ENCODE measurements at regions of chr2 and their contacts with region 1.

Region 1: GRCh38 chr2:41869542-41870264 is 178.1 kb upstream of the PKDCC start:
- DNase-seq: peak; percentile 32
- H3K4me3 Mint-ChIP-seq: no peak overlapping the region
- H3K27ac Mint-ChIP-seq: no peak overlapping the region
- H3K4me1 Mint-ChIP-seq: no peaks in the 10 kb centered on the region
- H3K27me3 Mint-ChIP-seq: peaks cover 12% of the 10 kb centered on the region

Region 2: DNA sequence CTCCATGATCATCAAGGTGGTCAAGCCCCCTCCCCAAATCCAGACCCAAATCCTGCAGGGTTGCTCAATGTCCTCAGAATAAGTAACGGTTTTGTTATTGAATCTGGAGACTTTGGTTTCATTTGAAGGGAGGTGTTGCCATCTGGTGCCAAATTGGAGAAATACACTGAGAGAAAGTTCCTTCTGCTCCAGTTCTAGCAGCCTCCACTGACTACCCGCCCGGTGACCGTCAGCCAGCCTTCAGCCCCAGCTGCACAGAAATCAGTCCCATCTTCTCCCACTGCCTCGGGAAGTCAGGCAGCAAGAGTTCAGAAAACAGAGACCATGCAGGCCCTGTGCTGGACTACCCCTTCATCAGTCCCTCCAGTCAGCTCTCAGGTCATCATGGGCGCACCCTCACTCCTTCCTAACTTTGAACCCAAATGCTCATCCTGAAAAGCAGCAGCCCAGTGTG is 216.8 kb after region 1 on chr2:
- intact Hi-C with region 1: loop called (anchors 1 kb)
- DNase-seq: peak; percentile 23
- H3K4me3 Mint-ChIP-seq: no peak overlapping the region
- H3K27ac Mint-ChIP-seq: no peak overlapping the region
- H3K4me1 Mint-ChIP-seq: peaks cover 16% of the 10 kb centered on the region
- H3K27me3 Mint-ChIP-seq: peaks cover 24% of the 10 kb centered on the region

Region 3: GRCh38 chr2:42328148-42328833 is 458.6 kb after region 1 on chr2:
- intact Hi-C with region 1: loop called (anchors 10 kb)
- DNase-seq: no peak
- H3K4me3 Mint-ChIP-seq: no peak overlapping the region
- H3K27ac Mint-ChIP-seq: peak overlapping the region; percentile 40
- H3K4me1 Mint-ChIP-seq: peaks cover 28% of the 10 kb centered on the region
- H3K27me3 Mint-ChIP-seq: no peaks in the 10 kb centered on the region

Measured in activated T-helper 1 cell treated with anti-CD3 and anti-CD28 coated beads, Interleukin-12 subunit alpha, Interleukin-12 subunit beta, Interleukin-2, Interleukin-4 antibody, amounts not matched to agents 30 ng/mL and 10 ng/mL and 1 ng/mL, durations not matched to agents 14 hours and 24 hours and 36 hours (primary cell).